Activated B cell treated with CpG ODN at 0.5 μM for 24 hours (primary cell): ENCODE measurements at regions of chr12 and their contacts with region 1.

Region 1: GRCh38 chr12:56448860-56449621 is at the start of gene TIMELESS:
- DNase-seq: peak; percentile 85
- ATAC-seq: peak; percentile 96
- H3K4me3 Mint-ChIP-seq: peak within 1 kb of the TSS; percentile 94
- H3K27ac Mint-ChIP-seq: peak within 1 kb of the TSS; percentile 97
- H3K4me1 Mint-ChIP-seq: peaks cover 22% of the 10 kb centered on the region
- H3K27me3 Mint-ChIP-seq: no peaks in the 10 kb centered on the region
- CTCF ChIP-seq: no peak
- total RNA-seq, gene TIMELESS: 31.8 and 35.0 TPM in 2 replicates

Region 2: DNA sequence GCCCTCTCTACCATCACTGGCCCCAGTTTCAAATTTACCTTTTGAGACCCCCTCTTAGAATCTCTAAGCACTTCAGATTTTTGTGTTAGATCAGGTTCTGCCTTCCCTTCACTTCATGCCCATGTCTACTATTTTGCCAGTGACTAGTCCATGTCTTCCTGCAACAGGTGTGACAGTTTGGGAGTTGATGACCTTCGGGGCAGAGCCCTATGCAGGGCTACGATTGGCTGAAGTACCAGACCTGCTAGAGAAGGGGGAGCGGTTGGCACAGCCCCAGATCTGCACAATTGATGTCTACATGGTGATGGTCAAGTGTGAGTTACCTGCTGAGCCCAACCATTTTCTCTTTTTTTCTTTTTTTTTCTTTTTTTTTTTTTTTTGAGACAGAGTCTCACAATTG is 350.4 kb before region 1 on chr12:
- CTCF ChIA-PET with region 1: no interaction called
- POLR2A ChIA-PET with region 1: interaction called, 12 read pairs
- intact Hi-C with region 1: no loop called
- DNase-seq: no peak
- ATAC-seq: no peak
- H3K4me3 Mint-ChIP-seq: no peak overlapping the region
- H3K27ac Mint-ChIP-seq: no peak overlapping the region
- H3K4me1 Mint-ChIP-seq: peaks cover 7% of the 10 kb centered on the region
- H3K27me3 Mint-ChIP-seq: peaks cover 20% of the 10 kb centered on the region
- CTCF ChIP-seq: no peak

Region 3: GRCh38 chr12:56127888-56128669 is 321.0 kb before region 1 on chr12 and contains the start of gene ESYT1:
- CTCF ChIA-PET with region 1: no interaction called
- POLR2A ChIA-PET with region 1: interaction called, 14 read pairs
- intact Hi-C with region 1: no loop called
- DNase-seq: peak; percentile 83
- ATAC-seq: peak; percentile 86
- H3K4me3 Mint-ChIP-seq: peak within 1 kb of the TSS; percentile 97
- H3K27ac Mint-ChIP-seq: peak within 1 kb of the TSS; percentile 98
- H3K4me1 Mint-ChIP-seq: peaks cover 69% of the 10 kb centered on the region
- H3K27me3 Mint-ChIP-seq: no peaks in the 10 kb centered on the region
- CTCF ChIP-seq: no peak
- total RNA-seq, gene ESYT1: 120 and 137 TPM in 2 replicates

Region 4: DNA sequence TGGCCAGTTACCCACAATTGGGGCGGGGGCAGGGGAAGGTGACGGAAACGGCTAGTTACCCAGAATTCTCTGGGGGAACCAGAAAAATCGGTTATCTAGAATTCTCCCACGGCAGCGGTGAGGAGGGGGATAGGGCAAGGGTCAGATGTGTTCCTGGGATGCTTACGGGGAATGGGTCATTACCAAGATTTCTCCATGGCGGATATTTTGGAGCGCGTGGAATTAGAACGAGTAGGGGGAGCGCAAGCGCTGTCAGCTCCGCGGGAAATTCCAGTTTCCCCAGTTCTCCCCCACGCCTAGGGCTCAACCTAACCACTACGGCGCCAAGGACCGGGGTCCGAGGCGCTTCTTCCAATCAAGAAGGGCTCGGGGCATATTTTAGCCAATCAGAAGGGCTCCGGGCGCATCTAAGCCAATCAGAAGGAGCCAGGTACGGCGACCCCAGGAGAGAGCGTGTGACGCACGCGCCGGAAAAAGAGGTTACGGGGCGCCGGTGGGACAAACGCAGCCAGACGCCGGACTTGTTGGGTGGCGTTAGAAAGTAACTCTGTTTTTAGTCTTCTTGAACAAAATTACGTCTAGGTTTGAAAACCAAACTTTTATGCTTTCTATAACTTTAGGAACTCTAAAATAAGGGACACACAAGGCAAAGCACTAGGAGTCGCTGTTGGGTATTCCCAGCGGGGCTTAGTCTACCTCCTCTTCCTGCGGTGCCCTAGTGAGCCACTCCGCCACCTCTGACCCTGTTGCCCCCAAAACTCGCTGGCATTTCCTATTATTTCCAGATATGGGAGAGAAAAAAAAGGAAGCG is 115.2 kb before region 1 on chr12 and contains the start of gene PAN2:
- CTCF ChIA-PET with region 1: interaction called, 3 read pairs
- POLR2A ChIA-PET with region 1: interaction called, 26 read pairs
- intact Hi-C with region 1: loop called (anchors 1 kb)
- DNase-seq: peak; percentile 85
- ATAC-seq: peak; percentile 91
- H3K4me3 Mint-ChIP-seq: peak within 1 kb of the TSS; percentile 96
- H3K27ac Mint-ChIP-seq: peak within 1 kb of the TSS; percentile 100
- H3K4me1 Mint-ChIP-seq: peaks cover 46% of the 10 kb centered on the region
- H3K27me3 Mint-ChIP-seq: no peaks in the 10 kb centered on the region
- CTCF ChIP-seq: no peak
- total RNA-seq, gene PAN2: 86.3 and 98.9 TPM in 2 replicates

Region 5: DNA sequence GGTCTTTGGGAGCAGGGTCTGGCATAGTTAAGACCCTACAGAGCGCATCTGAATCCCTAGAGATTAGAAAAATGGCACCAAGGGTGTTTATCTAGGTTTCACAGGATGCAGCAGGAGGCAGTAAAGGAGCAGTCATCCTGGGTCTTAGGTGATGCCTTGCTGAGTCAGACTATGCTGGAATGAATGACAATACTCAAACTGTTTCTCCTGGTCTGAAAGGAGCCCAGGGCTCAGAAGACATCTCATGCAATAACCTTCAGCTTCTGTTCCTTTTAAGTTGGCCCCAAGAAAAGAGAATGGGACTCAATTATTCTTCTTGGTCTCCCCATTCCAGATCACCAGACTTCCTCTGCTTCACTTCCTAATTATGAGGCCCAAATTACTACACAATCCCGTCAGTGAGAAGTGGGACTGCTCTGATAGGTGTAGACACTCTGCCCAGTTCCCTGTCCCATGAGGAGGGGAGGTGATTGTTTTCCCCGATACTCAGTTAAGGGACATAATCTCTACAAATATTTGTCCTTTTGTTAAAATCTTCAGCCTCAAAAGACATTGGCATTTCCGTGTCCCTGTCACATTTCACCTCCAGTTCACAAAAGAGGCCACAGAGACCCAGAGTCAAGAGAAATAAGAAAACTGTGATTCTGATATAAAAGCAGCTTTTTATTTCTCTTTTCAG is 71.6 kb before region 1 on chr12:
- CTCF ChIA-PET with region 1: no interaction called
- POLR2A ChIA-PET with region 1: interaction called, 16 read pairs
- intact Hi-C with region 1: loop called (anchors 1 kb)
- DNase-seq: no peak
- ATAC-seq: no peak
- H3K4me3 Mint-ChIP-seq: no peak overlapping the region
- H3K27ac Mint-ChIP-seq: peak overlapping the region; percentile 94
- H3K4me1 Mint-ChIP-seq: peaks cover 53% of the 10 kb centered on the region
- H3K27me3 Mint-ChIP-seq: no peaks in the 10 kb centered on the region
- CTCF ChIP-seq: no peak

Region 6: DNA sequence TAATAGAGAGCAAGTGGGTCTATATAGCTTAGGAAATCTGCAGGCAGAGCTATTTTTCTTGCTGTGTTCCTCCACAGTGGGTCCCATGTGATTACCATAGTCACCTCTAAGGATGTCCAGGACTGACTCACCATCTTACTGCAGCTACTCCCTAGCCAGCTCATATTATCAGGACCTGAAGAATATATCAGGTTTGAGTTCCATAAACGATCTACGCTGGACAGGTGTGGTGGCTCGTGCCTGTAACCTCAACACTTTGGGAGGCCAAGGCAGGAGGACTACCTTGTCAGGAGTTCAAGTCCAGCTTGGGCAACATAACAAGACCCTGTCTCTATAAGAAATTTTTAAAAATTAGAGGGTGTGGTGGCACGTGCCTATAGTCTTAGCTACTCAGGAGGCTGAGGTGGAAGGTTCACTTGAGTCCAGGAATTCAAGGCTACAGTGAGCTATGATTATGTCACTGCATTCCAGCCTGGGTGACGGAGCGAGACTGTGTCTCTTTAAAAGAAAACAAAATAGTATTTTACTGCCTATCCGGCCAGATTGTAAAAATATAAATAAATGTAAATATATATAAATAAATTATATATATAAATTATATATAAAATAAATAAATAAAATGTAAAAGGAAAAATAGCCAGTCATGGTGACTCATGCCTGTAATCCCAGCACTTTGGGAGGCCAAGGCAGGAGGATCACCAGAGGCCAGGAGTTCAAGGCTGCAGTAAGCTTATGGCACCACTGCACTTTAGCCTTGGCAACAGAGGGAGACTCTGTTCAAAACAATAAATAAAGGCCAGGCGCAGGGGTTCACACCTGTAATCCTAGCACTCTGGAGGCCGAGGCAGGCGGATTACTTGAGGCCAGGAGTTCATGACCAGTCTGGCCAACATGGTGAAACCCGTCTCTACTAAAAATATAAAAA is 12.5 kb after region 1 on chr12:
- CTCF ChIA-PET with region 1: interaction called, 27 read pairs
- POLR2A ChIA-PET with region 1: interaction called, 46 read pairs
- intact Hi-C with region 1: no loop called
- DNase-seq: no peak
- ATAC-seq: no peak
- H3K4me3 Mint-ChIP-seq: no peak overlapping the region
- H3K27ac Mint-ChIP-seq: peak overlapping the region; percentile 14
- H3K4me1 Mint-ChIP-seq: peaks cover 22% of the 10 kb centered on the region
- H3K27me3 Mint-ChIP-seq: no peaks in the 10 kb centered on the region
- CTCF ChIP-seq: no peak

Region 7: DNA sequence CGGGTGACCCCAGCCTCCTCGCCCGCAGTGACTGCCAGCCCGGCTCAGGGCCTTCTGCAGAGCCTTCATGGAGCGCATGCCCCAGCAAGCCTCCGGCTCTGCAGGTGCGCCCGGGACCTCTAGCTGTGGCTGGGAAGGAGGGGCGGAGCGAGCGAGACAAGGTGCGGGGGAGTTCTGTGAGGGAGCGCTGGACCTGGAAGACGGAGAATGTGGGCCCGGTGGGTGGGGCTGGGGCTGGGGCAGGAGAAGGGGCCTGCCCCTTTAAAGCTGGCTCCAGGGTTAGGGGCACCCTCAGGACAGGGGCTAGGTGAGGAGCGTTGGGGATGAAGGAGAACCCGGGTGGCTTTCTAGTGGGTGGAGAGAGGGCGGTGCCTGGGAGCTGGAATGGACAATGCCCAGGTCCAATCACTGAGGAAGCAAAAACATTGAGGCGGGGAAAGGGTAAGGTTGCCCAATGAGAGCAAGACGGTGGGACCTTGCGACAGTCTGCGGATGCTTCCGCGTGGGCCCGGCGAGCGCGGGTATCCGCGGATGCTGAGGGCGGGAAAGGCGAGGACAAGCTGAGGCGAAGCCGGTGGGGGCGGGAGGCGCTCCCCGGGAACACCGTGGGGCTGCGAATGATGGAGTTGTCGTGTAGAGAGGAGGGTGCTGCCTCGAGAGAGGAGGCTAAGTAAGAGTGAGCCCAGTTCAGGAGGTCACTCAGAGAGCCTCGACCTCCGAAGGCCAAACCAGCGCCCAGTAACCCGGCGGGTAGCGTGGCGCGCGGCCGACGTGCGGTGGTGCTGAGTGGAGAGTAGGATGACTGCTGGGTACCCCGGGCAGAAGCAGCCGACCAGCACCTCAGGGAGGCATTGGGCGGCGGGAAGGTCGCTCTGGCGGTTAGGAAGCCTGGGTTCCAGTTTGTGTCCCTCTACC is 39.3 kb after region 1 on chr12 and contains the start of gene GLS2:
- CTCF ChIA-PET with region 1: no interaction called
- POLR2A ChIA-PET with region 1: interaction called, 10 read pairs
- intact Hi-C with region 1: no loop called
- DNase-seq: peak; percentile 67
- ATAC-seq: peak; percentile 99
- H3K4me3 Mint-ChIP-seq: peak within 1 kb of the TSS; percentile 92
- H3K27ac Mint-ChIP-seq: peak within 1 kb of the TSS; percentile 81
- H3K4me1 Mint-ChIP-seq: peaks cover 17% of the 10 kb centered on the region
- H3K27me3 Mint-ChIP-seq: peaks cover 13% of the 10 kb centered on the region
- CTCF ChIP-seq: no peak
- total RNA-seq, gene GLS2: 2.6 and 3.5 TPM in 2 replicates